ENCODE measurements at regions of chr6 and their contacts with region 1.

Region 1: GRCh38 chr6:160353950-160354496 is 5.8 kb downstream of the SLC22A3 start:
- DNase-seq: no peak
- ATAC-seq: no peak
- H3K4me3 ChIP-seq: no peak overlapping the region
- H3K4me3 Mint-ChIP-seq: no peak overlapping the region
- H3K27ac ChIP-seq: no peak overlapping the region
- H3K27ac Mint-ChIP-seq: no peak overlapping the region
- H3K4me1 ChIP-seq: peaks cover 3% of the 10 kb centered on the region
- H3K4me1 Mint-ChIP-seq: peaks cover 2% of the 10 kb centered on the region
- H3K27me3 ChIP-seq: peaks cover 8 to 26% of the 10 kb centered on the region in 2 experiments
- H3K27me3 Mint-ChIP-seq: peaks cover 64% of the 10 kb centered on the region
- CTCF ChIP-seq: no peak

Region 2: DNA sequence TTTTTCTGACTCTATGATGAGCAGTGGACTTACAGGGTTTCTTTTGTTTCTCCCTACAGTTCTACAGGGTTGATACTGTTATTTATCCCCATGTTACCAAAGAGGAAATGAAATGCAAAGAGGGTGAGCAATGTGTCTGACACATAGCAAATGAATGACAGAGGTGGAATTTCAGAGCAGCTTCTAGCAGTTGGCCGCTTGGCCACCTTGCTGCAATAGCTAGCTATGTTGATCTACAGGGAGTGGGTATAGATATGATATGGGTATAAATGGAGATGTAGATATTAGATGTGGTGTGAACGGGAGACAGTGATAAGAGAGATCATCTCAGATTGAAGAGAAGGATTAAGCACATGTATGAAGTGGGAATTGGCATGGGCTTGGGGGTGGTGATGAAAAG is 16.7 kb before region 1 on chr6:
- CTCF ChIA-PET with region 1: no interaction called
- POLR2A ChIA-PET with region 1: no interaction called
- intact Hi-C with region 1: loop called in 1 of 2 experiments (anchors 1 kb)
- DNase-seq: no peak
- ATAC-seq: no peak
- H3K4me3 ChIP-seq: no peak overlapping the region
- H3K4me3 Mint-ChIP-seq: no peak overlapping the region
- H3K27ac ChIP-seq: no peak overlapping the region
- H3K27ac Mint-ChIP-seq: no peak overlapping the region
- H3K4me1 ChIP-seq: no peaks in the 10 kb centered on the region
- H3K4me1 Mint-ChIP-seq: no peaks in the 10 kb centered on the region
- H3K27me3 ChIP-seq: peaks cover 5 to 6% of the 10 kb centered on the region in 2 experiments
- H3K27me3 Mint-ChIP-seq: peaks cover 41% of the 10 kb centered on the region
- CTCF ChIP-seq: no peak

Region 3: DNA sequence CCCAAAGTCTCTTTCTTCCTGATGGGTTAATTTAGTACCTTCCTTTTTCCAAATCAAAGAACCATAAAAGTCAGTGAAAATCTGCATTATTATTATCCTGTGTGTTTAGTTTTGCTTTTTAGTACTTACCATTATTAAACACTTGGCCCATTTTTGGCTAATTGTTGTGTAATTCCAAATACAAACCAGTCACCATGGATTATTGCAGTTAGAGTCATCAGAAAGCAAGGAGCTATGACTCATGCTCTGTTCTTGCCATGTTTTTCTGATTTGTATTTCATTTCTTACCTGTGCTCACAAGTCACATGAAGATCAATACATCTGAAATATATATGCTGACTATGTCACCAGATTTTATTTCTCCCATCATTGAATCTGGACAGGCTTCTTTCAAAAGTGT is 25.4 kb after region 1 on chr6:
- CTCF ChIA-PET with region 1: no interaction called
- POLR2A ChIA-PET with region 1: no interaction called
- intact Hi-C with region 1: no loop called
- DNase-seq: no peak
- ATAC-seq: no peak
- H3K4me3 ChIP-seq: no peak overlapping the region
- H3K4me3 Mint-ChIP-seq: no peak overlapping the region
- H3K27ac ChIP-seq: no peak overlapping the region
- H3K27ac Mint-ChIP-seq: no peak overlapping the region
- H3K4me1 ChIP-seq: no peaks in the 10 kb centered on the region
- H3K4me1 Mint-ChIP-seq: no peaks in the 10 kb centered on the region
- H3K27me3 ChIP-seq: peaks cover 0 to 3% of the 10 kb centered on the region in 2 experiments
- H3K27me3 Mint-ChIP-seq: peaks cover 15% of the 10 kb centered on the region
- CTCF ChIP-seq: no peak

Region 4: GRCh38 chr6:160398674-160399271 is 44.8 kb after region 1 on chr6:
- CTCF ChIA-PET with region 1: no interaction called
- POLR2A ChIA-PET with region 1: no interaction called
- intact Hi-C with region 1: no loop called
- DNase-seq: peak in 1 of 14 experiments; percentile 28
- ATAC-seq: no peak
- H3K4me3 ChIP-seq: no peak overlapping the region
- H3K4me3 Mint-ChIP-seq: no peak overlapping the region
- H3K27ac ChIP-seq: no peak overlapping the region
- H3K27ac Mint-ChIP-seq: no peak overlapping the region
- H3K4me1 ChIP-seq: no peaks in the 10 kb centered on the region
- H3K4me1 Mint-ChIP-seq: no peaks in the 10 kb centered on the region
- H3K27me3 ChIP-seq: no peaks in the 10 kb centered on the region
- H3K27me3 Mint-ChIP-seq: peaks cover 17% of the 10 kb centered on the region
- CTCF ChIP-seq: no peak

Measured in CD4-positive, alpha-beta T cell (primary cell).